BJ (cell line): ENCODE measurements at regions of chr12 and their contacts with region 1.

Region 1: GRCh38 chr12:110679201-110679600 is 9.7 kb downstream of the HVCN1 start:
- DNase-seq: no peak
- H3K4me3 ChIP-seq: no peak overlapping the region
- H3K27me3 ChIP-seq: no peaks in the 10 kb centered on the region
- CTCF ChIP-seq: no peak

Region 2: DNA sequence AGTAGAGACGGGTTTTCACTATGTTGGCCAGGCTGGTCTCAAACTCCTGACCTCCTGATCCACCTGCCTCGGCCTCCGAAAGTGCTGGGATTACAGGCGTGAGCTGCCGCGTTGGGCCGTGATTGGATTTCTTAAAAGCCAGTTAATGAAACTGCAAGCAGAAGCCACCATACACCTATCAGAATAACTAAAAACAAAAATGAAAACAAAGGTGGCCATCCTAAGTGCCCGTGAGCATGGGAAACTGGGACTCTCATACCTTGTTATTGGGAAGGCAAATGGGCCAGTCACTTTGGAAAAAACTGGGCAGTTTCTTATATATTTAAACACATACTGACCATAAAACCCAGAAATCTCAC is 73.0 kb before region 1 on chr12:
- CTCF ChIA-PET with region 1: no interaction called
- POLR2A ChIA-PET with region 1: no interaction called
- DNase-seq: no peak
- H3K4me3 ChIP-seq: no peak overlapping the region
- H3K27me3 ChIP-seq: no peaks in the 10 kb centered on the region; the same call in 1 of the 2 replicates
- CTCF ChIP-seq: no peak

Region 3: GRCh38 chr12:110698171-110698902 is 19.1 kb after region 1 on chr12:
- CTCF ChIA-PET with region 1: no interaction called
- POLR2A ChIA-PET with region 1: no interaction called
- DNase-seq: no peak
- H3K4me3 ChIP-seq: no peak overlapping the region
- H3K27me3 ChIP-seq: 0 out of 2 replicates have a peak, but pooled peaks cover 4% of the 10 kb centered on the region
- CTCF ChIP-seq: peak; percentile 60

Region 4: DNA sequence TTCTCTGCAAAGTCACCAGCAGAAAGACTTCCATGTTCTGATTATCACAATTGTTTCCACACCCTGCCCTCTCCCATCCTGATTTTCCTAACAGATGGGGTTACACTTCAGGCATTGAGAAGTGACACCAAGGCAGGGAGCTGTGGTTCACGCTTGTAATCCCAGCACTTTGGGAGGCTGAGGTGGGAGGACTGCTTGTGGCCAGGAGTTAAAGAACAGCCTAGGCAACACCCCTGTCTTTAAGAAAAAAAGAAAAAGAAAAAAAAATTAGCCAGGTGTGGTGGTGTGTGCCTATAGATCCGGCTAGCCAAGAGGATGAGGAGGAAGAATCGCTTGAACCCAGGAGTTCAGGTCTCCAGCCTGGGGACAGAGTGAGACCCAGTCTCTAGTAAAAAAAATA is 58.3 kb after region 1 on chr12:
- CTCF ChIA-PET with region 1: no interaction called
- POLR2A ChIA-PET with region 1: interaction called, 11 read pairs
- DNase-seq: no peak
- H3K4me3 ChIP-seq: no peak overlapping the region
- H3K27me3 ChIP-seq: no peaks in the 10 kb centered on the region
- CTCF ChIP-seq: no peak

Region 5: GRCh38 chr12:110913119-110914056 is 234.2 kb after region 1 on chr12:
- CTCF ChIA-PET with region 1: no interaction called
- POLR2A ChIA-PET with region 1: no interaction called
- DNase-seq: no peak
- H3K4me3 ChIP-seq: no peak overlapping the region
- H3K27me3 ChIP-seq: no peaks in the 10 kb centered on the region
- CTCF ChIP-seq: no peak